Dendritic cell treated with granulocyte-macrophage colony-stimulating factor and Interleukin-4, amounts not matched to agents 40 ng/mL and 50 ng/mL, for 4 days (primary cell): ENCODE measurements at regions of chr1 and their contacts with region 1.

Region 1: GRCh38 chr1:169485544-169486278 is at the start of gene SLC19A2:
- H3K4me3 Mint-ChIP-seq: peak within 1 kb of the TSS; percentile 82
- H3K27ac Mint-ChIP-seq: peak within 1 kb of the TSS; percentile 78
- H3K4me1 Mint-ChIP-seq: peaks cover 47% of the 10 kb centered on the region
- H3K27me3 Mint-ChIP-seq: no peaks in the 10 kb centered on the region

Region 2: GRCh38 chr1:169115891-169116585 is 369.7 kb before region 1 on chr1:
- intact Hi-C with region 1: loop called (anchors 10 kb)
- H3K4me3 Mint-ChIP-seq: peak overlapping the region; percentile 53
- H3K27ac Mint-ChIP-seq: peak overlapping the region; percentile 87
- H3K4me1 Mint-ChIP-seq: peaks cover 59% of the 10 kb centered on the region
- H3K27me3 Mint-ChIP-seq: no peaks in the 10 kb centered on the region

Region 3: DNA sequence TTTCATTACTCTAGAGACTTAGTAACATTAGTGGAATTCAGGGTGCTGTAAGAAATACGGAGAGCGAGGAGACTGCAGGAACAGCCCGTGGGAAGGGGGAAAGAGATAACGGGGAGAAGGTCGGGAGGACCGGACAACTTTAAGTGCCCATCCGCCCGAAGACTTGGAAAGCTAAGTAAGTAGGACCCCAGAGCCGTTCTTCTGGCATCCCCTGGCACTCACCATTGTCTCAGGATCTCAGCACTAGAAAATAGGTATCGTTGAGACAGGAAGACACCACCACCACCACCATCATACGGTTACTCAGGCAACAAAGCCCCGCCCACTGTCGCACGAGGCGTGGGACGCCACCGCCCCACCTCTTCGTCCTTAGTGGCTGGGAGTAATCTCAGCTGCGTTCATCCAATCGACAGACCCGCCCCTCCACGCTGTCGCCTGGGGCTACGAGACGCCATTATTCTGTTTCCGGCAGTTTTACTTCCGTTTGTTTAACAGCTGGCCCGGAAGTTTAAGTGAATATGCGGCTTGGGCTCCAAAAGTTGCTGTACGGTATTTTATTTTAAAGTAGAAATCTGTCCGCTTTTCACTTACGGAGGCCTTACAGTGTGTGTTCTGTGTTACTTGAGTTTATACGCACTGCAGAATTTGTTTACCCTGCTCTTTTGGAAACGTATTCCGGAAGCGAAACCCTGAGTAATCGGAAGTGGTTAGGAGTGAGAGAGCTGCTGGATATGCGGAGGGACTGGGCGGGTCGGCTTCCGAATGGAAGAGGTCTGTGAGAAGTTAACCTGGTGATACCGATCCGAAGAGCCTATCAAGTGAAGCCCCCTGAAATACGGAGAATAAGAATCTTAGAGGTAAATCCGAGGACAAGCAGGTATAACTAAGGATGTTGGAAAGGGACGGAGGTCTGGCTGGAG is 118.0 kb before region 1 on chr1 and contains the starts of genes BLZF1 and NME7:
- intact Hi-C with region 1: loop called (anchors 5 kb)
- H3K4me3 Mint-ChIP-seq: no peak within 1 kb of the TSS
- H3K27ac Mint-ChIP-seq: no peak within 1 kb of the TSS
- H3K4me1 Mint-ChIP-seq: peaks cover 12% of the 10 kb centered on the region
- H3K27me3 Mint-ChIP-seq: no peaks in the 10 kb centered on the region

Region 4: DNA sequence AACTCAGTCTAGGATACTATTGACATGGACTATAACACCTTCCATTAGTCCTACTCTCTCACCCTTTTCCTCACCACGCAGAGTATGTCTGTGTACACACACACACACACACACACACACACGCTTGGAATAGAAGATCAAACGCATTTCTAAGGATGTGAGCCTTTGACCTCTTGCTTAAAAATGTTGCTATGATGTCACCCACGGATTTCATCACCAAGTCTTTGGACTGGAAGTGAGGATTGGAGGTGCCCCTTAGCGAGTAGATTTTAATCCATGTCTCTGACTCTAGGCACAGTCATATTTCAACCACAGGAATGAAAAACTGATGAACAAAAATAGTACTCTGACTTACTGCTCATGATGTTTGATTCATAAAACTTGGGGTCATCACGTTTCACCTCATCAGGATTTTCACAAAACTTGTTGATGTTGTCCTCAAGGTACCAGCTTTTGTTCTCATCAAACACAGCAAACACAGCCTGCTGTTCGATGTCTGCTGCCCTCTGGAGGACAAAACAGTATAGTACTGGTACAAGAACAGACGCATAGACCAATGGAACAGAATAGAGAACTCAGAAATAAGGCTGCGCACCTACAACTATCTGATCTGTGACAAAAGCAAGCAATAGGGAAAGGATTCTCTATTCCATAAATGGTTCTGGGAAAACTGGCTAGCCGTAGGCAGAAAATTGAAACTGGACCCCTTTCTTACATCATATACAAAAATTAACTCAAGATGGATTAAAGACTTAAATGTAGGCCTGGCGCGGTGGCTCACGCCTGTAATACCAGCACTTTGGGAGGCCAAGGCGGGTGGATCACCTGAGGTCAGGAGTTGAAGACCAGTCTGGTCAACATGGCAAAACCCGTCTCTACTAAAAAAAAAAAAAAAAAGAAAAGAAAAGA is 60.6 kb after region 1 on chr1:
- intact Hi-C with region 1: loop called (anchors 5 kb)
- H3K4me3 Mint-ChIP-seq: no peak overlapping the region
- H3K27ac Mint-ChIP-seq: no peak overlapping the region
- H3K4me1 Mint-ChIP-seq: no peaks in the 10 kb centered on the region
- H3K27me3 Mint-ChIP-seq: no peaks in the 10 kb centered on the region

Region 5: GRCh38 chr1:169680377-169681019 is 194.8 kb after region 1 on chr1:
- intact Hi-C with region 1: no loop called
- H3K4me3 Mint-ChIP-seq: no peak overlapping the region
- H3K27ac Mint-ChIP-seq: no peak overlapping the region
- H3K4me1 Mint-ChIP-seq: peaks cover 13% of the 10 kb centered on the region
- H3K27me3 Mint-ChIP-seq: no peaks in the 10 kb centered on the region

Region 6: DNA sequence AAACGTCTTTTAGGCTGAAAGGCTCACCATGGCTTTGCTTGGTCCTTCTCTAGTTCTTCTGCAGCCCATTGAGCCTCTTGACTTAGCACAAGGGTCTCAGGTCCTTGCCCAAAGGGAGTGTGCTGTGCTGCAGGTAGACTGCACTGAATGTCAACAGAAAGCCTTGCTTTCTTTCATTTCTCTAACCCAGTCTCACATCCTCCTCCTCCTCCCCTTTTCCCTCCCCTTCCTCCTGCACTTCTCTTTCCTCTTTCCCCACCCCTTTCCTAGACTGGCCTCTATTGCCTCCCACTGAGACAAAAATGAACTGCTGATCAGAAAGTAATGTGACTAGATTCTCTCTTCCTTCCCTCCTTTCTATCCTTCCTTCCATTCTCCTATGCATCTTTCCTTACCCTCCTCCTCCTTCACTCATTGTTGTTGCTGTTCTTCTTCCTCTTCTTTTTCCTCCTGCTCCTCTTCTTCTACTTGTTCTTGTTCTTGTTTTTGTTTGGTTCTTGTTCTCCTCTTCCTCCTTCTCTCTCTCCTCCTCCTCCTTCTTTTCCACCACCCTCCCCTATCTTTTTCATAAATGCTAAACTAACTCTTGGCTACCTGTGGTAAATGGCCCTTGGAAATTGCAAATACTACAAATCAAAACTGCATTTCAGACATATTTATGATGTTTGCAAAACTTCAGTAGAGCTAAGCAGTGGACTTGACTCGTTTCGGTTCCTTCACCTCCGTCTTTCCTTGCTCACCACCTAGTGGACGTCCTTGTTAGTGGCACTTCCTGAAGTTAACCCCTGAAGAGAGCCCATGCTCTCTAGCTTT is 226.0 kb after region 1 on chr1 and contains the start of gene SELL:
- intact Hi-C with region 1: loop called (anchors 10 kb)
- H3K4me3 Mint-ChIP-seq: peak within 1 kb of the TSS; percentile 61
- H3K27ac Mint-ChIP-seq: peak within 1 kb of the TSS; percentile 61
- H3K4me1 Mint-ChIP-seq: peaks cover 32% of the 10 kb centered on the region
- H3K27me3 Mint-ChIP-seq: peaks cover 1% of the 10 kb centered on the region

Region 7: DNA sequence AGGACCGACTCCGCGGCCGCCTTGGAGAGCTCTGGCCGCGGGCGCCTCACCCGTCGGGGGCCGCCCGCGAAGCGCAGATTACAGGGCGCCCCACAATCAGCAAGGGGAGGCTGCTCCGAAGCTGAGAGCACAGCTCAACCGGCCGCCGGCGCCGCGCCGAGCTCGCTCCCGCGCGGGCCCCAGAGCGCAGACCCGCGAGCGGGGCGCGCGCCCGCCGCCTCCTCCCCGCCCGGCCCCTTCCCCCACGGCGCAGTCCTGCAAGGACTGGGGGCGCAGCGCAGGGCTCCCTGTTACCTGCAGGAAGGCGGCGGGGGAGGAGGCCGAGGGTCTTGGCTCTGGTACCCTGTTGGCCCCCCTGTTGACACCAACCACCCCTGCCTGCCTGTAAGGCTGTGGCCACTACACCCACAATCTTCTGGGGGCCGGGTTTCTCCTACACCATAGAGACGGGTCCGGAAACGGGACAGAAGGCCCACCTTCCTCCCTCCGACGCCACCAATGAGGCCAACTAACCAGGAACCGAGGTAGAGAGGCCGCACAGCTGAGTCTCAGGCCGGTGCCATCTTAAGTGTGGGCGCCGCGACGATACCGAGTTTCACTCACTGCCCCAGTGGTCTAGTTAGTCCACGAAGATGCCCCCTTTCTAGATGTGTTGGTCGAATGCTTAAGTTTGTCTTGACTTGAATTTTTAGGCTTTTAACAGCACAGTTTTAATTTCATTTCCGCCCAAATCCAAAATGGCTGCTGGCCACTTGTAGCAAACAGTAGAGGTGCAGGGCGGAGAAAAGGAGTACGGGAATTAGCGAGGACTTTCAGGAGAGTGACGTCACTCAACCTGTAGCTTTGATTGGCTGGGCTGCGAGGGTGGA is 408.0 kb after region 1 on chr1 and contains the start of gene SCYL3:
- intact Hi-C with region 1: loop called (anchors 5 kb)
- H3K4me3 Mint-ChIP-seq: peak within 1 kb of the TSS; percentile 87
- H3K27ac Mint-ChIP-seq: peak within 1 kb of the TSS; percentile 100
- H3K4me1 Mint-ChIP-seq: peaks cover 44% of the 10 kb centered on the region
- H3K27me3 Mint-ChIP-seq: peaks cover 11% of the 10 kb centered on the region

Region 8: GRCh38 chr1:169928438-169929209 is 442.9 kb after region 1 on chr1:
- intact Hi-C with region 1: no loop called
- H3K4me3 Mint-ChIP-seq: no peak overlapping the region
- H3K27ac Mint-ChIP-seq: no peak overlapping the region
- H3K4me1 Mint-ChIP-seq: no peaks in the 10 kb centered on the region
- H3K27me3 Mint-ChIP-seq: no peaks in the 10 kb centered on the region

Region 9: DNA sequence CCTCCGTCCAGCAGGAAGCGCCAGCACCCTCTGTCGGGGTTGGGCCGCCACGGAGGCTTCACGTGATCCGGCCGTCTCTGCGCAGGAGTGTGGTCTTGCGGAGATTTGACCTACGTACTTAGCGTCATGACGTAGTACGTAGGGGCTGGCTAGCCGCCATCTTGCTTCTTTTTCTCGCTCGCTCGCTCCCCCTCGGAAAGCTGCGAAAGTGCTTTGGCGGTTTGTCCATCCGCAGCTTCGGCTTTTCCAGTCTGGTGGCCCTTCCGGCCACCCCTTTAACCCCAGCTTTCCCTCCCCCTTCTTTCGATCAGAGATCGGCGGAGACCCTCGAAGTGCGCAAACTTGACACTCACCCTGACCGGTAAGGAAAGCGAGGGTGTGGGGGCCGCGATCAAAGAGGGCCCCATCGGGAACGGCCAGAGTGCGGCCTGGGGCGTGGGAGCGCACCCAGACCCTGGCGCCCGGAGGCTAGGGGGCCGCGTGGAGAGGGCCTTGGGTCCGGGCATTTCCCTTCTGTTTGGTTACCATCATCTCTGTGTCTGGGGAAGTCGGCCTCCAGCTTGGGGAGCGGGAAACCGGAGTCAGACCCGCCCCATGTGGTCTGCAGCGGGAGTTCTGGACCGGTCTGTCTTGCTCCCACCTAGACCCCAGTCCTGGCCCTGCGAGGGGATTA is 1999.8 kb after region 1 on chr1 and contains the start of gene PRRC2C:
- intact Hi-C with region 1: loop called (anchors 10 kb)
- H3K4me3 Mint-ChIP-seq: peak within 1 kb of the TSS; percentile 93
- H3K27ac Mint-ChIP-seq: peak within 1 kb of the TSS; percentile 96
- H3K4me1 Mint-ChIP-seq: peaks cover 32% of the 10 kb centered on the region
- H3K27me3 Mint-ChIP-seq: no peaks in the 10 kb centered on the region